Activated naive CD4-positive, alpha-beta T cell treated with anti-CD3 and anti-CD28 coated beads, Interleukin-2, amount 10 ng/mL, durations not matched to agents 7 days and 5 days (primary cell): ENCODE measurements at regions of chr7 and their contacts with region 1.

Region 1: GRCh38 chr7:128398016-128398840 is 11.6 kb downstream of the IMPDH1 start:
- DNase-seq: peak; percentile 62
- H3K4me3 Mint-ChIP-seq: no peak overlapping the region
- H3K27ac Mint-ChIP-seq: no peak overlapping the region
- H3K4me1 Mint-ChIP-seq: peaks cover 6% of the 10 kb centered on the region
- H3K27me3 Mint-ChIP-seq: no peaks in the 10 kb centered on the region

Region 2: DNA sequence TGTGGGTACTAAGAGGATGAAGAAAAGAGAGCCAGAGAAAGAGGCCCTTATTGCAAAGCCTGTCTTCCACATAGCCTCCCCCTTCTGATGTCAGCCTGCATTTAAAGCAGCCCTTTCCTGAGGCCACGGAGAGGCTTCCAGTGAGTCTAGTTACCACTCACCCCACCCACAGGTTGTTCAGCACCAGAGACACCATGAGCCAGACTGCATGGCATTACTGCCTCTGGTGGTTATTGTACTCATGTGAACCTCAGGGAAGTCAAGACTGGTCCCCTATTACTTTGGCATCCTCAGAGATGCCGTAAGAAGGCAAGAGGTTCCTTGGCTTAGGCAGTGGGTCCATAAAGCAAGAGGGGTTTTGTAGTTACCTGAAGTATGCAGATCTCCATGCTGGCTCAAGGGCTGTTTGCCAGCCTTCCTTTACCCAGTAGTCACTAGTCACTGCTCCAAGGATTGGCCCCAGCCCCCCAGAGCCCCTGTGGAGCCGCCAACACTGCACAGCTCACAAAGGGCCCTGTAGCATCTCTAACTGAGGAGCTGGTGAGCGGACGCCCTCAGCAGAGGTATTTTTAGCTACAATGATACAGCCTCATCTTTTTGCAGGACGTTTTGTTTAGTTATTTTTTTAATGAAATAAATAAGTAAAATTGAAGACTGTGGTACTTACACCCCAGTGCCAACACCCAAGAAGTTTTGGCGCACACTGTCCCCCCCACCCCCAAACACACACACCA is 387.7 kb before region 1 on chr7:
- CTCF ChIA-PET with region 1: no interaction called
- DNase-seq: no peak
- H3K4me3 Mint-ChIP-seq: no peak overlapping the region
- H3K27ac Mint-ChIP-seq: no peak overlapping the region
- H3K4me1 Mint-ChIP-seq: no peaks in the 10 kb centered on the region
- H3K27me3 Mint-ChIP-seq: no peaks in the 10 kb centered on the region

Region 3: DNA sequence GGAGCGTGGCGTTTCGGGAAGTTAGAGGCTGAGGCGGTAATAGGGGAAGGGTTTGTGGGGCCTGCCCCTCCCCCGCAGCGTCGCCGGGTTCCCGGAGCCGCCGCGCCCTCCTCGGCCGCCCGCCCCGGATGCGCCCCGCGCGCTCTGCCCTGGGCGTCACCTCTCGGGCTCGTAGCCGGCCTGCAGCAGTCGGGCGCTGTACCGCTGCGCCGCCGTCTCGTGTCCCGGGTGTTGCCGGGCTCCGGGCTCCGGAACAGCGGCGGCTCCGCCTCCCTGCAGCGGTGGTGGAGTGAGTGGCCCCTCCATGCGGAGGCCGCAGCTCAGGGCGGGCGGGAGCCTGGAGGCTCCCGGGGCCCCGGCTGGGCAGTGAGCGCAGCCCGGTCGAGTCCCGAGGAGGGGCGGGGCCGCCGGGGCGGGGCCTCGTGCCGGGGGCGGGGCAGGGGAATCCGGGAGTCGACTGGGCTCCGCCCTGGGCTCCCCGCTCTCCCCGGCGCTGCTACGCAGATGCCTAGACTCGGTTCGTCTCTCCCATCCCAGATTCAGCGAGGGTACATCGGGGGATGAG is 11.4 kb after region 1 on chr7 and contains the start of gene IMPDH1:
- CTCF ChIA-PET with region 1: interaction called, 35 read pairs
- DNase-seq: peak; percentile 91
- H3K4me3 Mint-ChIP-seq: peak within 1 kb of the TSS; percentile 91
- H3K27ac Mint-ChIP-seq: peak within 1 kb of the TSS; percentile 84
- H3K4me1 Mint-ChIP-seq: peaks cover 41% of the 10 kb centered on the region
- H3K27me3 Mint-ChIP-seq: peaks cover 67% of the 10 kb centered on the region

Region 4: GRCh38 chr7:128455551-128456254 is 57.5 kb after region 1 on chr7 and contains the start of gene HILPDA:
- CTCF ChIA-PET with region 1: interaction called, 24 read pairs
- DNase-seq: peak; percentile 95
- H3K4me3 Mint-ChIP-seq: peak within 1 kb of the TSS; percentile 88
- H3K27ac Mint-ChIP-seq: peak within 1 kb of the TSS; percentile 96
- H3K4me1 Mint-ChIP-seq: peaks cover 57% of the 10 kb centered on the region
- H3K27me3 Mint-ChIP-seq: peaks cover 35% of the 10 kb centered on the region